ENCODE measurements at regions of chr2 and their contacts with region 1.

Region 1: GRCh38 chr2:27771548-27772335 is at the start of gene MRPL33:
- DNase-seq: peak; percentile 85 to 92 (median 89)
- ATAC-seq: peak; percentile 97
- H3K4me3 ChIP-seq: peak within 1 kb of the TSS; percentile 92
- H3K4me3 Mint-ChIP-seq: peak within 1 kb of the TSS; percentile 96 to 100 (median 99)
- H3K27ac ChIP-seq: peak within 1 kb of the TSS; percentile 92
- H3K27ac Mint-ChIP-seq: peak within 1 kb of the TSS; percentile 97 to 100 (median 100)
- H3K4me1 ChIP-seq: peaks cover 10 to 20% of the 10 kb centered on the region in 2 donors
- H3K4me1 Mint-ChIP-seq: peaks cover 32 to 59% (median 52%) of the 10 kb centered on the region in 7 donors
- H3K27me3 ChIP-seq: no peaks in the 10 kb centered on the region
- H3K27me3 Mint-ChIP-seq: peaks cover 0 to 8% (median 0%) of the 10 kb centered on the region in 5 donors
- total RNA-seq, gene MRPL33: 27.3 to 39.4 (median 35.1) TPM

Region 2: GRCh38 chr2:27715318-27716210 is 56.2 kb before region 1 on chr2:
- CTCF ChIA-PET with region 1: no interaction called
- POLR2A ChIA-PET with region 1: no interaction called
- intact Hi-C with region 1: loop called in 1 of 2 experiments (anchors 5 kb)
- DNase-seq: peak; percentile 22 to 66 (median 54)
- ATAC-seq: peak; percentile 73
- H3K4me3 ChIP-seq: peak overlapping the region; percentile 48
- H3K4me3 Mint-ChIP-seq: peak overlapping the region in 8 of 10 donors; percentile 52 to 79 (median 62)
- H3K27ac ChIP-seq: no peak overlapping the region
- H3K27ac Mint-ChIP-seq: no peak overlapping the region
- H3K4me1 ChIP-seq: peaks cover 3 to 19% of the 10 kb centered on the region in 2 donors
- H3K4me1 Mint-ChIP-seq: peaks cover 15 to 33% (median 23%) of the 10 kb centered on the region in 7 donors
- H3K27me3 ChIP-seq: no peaks in the 10 kb centered on the region
- H3K27me3 Mint-ChIP-seq: peaks cover 9 to 21% (median 12%) of the 10 kb centered on the region in 5 donors

Region 3: GRCh38 chr2:27735263-27735953 is 36.3 kb before region 1 on chr2:
- CTCF ChIA-PET with region 1: no interaction called
- POLR2A ChIA-PET with region 1: no interaction called
- intact Hi-C with region 1: loop called in 1 of 2 experiments (anchors 2 kb)
- DNase-seq: peak; percentile 23 to 71 (median 49)
- ATAC-seq: peak; percentile 81
- H3K4me3 ChIP-seq: peak overlapping the region; percentile 57
- H3K4me3 Mint-ChIP-seq: peak overlapping the region; percentile 59 to 82 (median 74)
- H3K27ac ChIP-seq: peak overlapping the region; percentile 27
- H3K27ac Mint-ChIP-seq: peak overlapping the region; percentile 2 to 87 (median 72)
- H3K4me1 ChIP-seq: peaks cover 5 to 15% of the 10 kb centered on the region in 2 donors
- H3K4me1 Mint-ChIP-seq: peaks cover 6 to 25% (median 14%) of the 10 kb centered on the region in 7 donors
- H3K27me3 ChIP-seq: no peaks in the 10 kb centered on the region
- H3K27me3 Mint-ChIP-seq: no peaks in the 10 kb centered on the region

Region 4: DNA sequence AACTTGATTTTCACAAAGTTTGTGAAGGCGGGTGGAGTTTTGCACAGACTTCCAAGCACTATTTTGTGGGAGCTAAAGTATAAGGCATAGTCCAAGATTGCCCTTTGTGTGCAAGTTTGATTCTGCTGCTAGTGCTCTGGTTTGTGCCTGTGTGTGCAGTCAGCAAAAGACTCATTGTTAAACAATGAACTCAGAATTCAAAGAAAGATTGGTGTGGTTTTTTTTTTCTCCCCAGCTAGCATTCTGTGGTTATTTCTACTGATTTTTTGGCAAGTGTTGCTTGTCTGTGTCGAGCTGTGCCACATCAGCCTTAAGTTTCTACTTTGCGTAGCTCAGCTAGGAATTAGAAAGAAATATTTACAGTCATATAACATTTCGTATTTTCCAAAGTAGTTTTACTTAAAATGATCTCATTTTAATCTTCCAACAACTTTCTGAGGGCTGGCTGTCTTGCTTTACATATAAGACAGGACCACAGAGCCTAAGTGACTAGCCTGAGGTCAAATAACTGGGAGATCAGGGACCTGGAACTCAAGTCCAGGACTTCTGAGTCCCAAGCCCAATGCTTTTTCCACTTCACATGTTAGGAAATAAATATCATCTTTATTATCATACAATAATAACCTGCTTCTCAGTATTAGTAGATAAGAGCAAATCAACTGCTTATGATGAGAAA is 188.6 kb after region 1 on chr2:
- CTCF ChIA-PET with region 1: no interaction called
- POLR2A ChIA-PET with region 1: no interaction called
- intact Hi-C with region 1: loop called in 1 of 2 experiments (anchors 10 kb)
- DNase-seq: peak in 5 of 9 donors; percentile 3 to 31 (median 22)
- ATAC-seq: peak; percentile 54
- H3K4me3 ChIP-seq: no peak overlapping the region
- H3K4me3 Mint-ChIP-seq: peak overlapping the region in 7 of 10 donors; percentile 5 to 71 (median 46)
- H3K27ac ChIP-seq: no peak overlapping the region
- H3K27ac Mint-ChIP-seq: peak overlapping the region in 5 of 9 donors; percentile 7 to 83 (median 52)
- H3K4me1 ChIP-seq: peaks cover 22 to 28% of the 10 kb centered on the region in 2 donors
- H3K4me1 Mint-ChIP-seq: peaks cover 25 to 77% (median 63%) of the 10 kb centered on the region in 7 donors
- H3K27me3 ChIP-seq: no peaks in the 10 kb centered on the region
- H3K27me3 Mint-ChIP-seq: no peaks in the 10 kb centered on the region

Measured in naive thymus-derived CD4-positive, alpha-beta T cell (primary cell).